Activated CD8-positive, alpha-beta memory T cell treated with anti-CD3 and anti-CD28 coated beads, Interleukin-2, amount 10 ng/mL, durations not matched to agents 7 days and 5 days (primary cell): ENCODE measurements at regions of chr15 and their contacts with region 1.

Region 1: GRCh38 chr15:74826364-74826819 is at the start of gene CPLX3:
- DNase-seq: peak; percentile 58
- ATAC-seq: peak; percentile 62
- H3K4me3 Mint-ChIP-seq: no peak within 1 kb of the TSS
- H3K27ac Mint-ChIP-seq: no peak within 1 kb of the TSS
- H3K4me1 Mint-ChIP-seq: peaks cover 15% of the 10 kb centered on the region
- H3K27me3 Mint-ChIP-seq: peaks cover 34% of the 10 kb centered on the region
- total RNA-seq, gene CPLX3: 0.35 TPM in 1 of 2 experiments, not detected in the other

Region 2: DNA sequence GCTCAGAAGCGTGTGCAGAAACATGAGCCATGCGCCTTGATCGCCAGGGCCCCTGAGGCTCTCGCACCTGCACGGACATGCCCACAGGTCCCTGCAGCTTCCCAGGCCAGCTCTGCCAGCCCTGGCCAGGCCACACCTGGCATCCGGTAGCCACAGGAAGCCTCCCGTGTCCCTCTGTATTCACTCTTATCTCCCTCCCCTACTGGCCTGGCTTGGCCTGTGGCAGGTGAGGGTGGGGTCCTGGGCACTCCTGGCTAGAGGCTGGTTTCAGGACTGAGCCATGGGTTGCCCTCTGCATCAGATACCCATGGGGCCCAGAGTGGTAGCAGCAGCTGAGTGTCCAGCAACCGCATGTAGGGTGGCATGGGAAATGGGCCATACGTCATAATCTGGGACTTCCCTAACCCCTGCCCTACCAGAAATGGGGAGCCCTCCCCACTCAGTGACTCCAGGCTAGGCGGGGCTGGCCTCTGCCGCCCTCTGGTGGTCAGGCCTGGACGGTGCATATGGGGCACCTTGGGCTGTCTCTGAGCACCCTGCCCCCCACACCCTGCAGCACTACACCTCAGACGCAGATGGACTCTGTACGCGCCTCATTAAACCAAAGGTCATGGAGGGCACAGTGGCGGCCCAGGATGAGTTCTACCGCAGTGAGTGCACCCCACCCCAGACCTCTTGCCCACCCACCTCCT is 26.4 kb before region 1 on chr15:
- CTCF ChIA-PET with region 1: interaction called, 11 read pairs
- DNase-seq: peak; percentile 90
- ATAC-seq: peak; percentile 91
- H3K4me3 Mint-ChIP-seq: no peak overlapping the region
- H3K27ac Mint-ChIP-seq: peak overlapping the region; percentile 74
- H3K4me1 Mint-ChIP-seq: peaks cover 54% of the 10 kb centered on the region
- H3K27me3 Mint-ChIP-seq: no peaks in the 10 kb centered on the region

Region 3: DNA sequence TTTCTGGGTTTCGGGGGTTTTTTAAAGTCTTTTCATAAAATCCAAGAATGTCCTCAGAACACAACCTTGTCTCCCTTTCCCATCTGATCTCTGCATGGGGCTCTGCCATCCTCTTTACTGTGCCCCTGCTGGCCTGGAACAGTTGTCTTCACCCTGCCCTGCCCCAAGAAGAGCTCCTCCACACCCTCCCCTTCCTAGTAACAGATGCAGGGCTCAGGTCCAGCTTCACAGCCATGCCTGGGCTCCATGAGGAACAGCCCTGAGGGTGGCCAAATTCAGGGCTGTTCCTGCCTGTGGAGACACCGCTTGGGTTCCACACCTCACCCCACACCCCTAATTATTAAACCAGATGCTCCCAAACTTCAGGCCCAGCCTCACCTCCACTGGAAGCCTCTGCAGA is 29.5 kb after region 1 on chr15:
- CTCF ChIA-PET with region 1: no interaction called
- DNase-seq: no peak
- ATAC-seq: no peak
- H3K4me3 Mint-ChIP-seq: no peak overlapping the region
- H3K27ac Mint-ChIP-seq: peak overlapping the region; percentile 76
- H3K4me1 Mint-ChIP-seq: peaks cover 38% of the 10 kb centered on the region
- H3K27me3 Mint-ChIP-seq: no peaks in the 10 kb centered on the region